Activated T-helper 2 cell treated with anti-CD3 and anti-CD28 coated beads, Interferon-gamma antibody, Interleukin-2, Interleukin-4, amounts not matched to agents 10 μg/mL and 5 μg/mL and 100 μg/mL, durations not matched to agents 14 hours and 24 hours and 36 hours (primary cell): ENCODE measurements at regions of chr3 and their contacts with region 1.

Region 1: GRCh38 chr3:195407531-195408409 is 35.0 kb downstream of the ACAP2 start:
- DNase-seq: no peak
- H3K4me3 Mint-ChIP-seq: peak overlapping the region; percentile 24
- H3K27ac Mint-ChIP-seq: peak overlapping the region; percentile 56
- H3K4me1 Mint-ChIP-seq: peaks cover 32% of the 10 kb centered on the region
- H3K27me3 Mint-ChIP-seq: no peaks in the 10 kb centered on the region

Region 2: DNA sequence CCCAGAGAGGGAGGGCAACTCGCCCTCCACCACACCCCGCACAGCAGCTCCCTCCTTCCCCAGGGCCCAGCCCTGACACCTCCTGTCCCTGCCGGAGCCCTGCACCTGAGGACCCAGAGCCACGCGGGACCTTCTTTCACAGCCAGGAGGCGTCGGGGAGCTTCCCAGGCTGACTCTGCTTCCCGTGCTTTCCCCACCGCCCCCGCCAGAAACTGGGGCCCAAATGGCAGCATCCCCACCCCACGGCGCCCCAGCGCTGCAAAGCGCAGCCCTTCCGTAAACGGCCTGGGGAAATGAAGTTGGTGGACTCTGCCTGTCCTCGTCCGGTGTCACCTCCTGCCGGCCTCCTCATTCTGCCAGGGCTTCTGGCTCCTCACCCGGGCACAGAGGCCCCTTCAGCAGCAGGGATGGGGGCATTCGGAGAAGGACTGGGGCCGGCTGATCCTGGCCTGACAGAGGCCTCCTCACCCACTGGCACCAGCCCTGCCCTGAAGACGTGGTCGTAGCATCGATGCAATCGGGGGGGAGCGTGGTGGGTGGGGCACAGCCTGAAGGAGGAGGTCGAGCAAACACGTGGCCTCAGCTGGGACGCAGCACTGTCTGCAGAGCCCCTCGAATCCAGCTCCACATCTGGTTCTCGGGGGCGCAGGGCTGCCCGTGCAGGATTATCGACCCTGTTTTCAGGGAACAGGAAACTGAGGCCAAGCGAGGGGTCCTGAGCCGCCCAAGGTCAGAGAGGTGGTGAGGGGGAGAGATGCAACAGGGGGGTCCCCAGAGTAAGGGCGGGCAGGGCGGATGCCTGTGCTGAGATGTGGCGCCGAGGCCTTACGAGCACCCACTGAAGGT is 372.2 kb before region 1 on chr3:
- intact Hi-C with region 1: no loop called
- DNase-seq: no peak
- H3K4me3 Mint-ChIP-seq: no peak overlapping the region
- H3K27ac Mint-ChIP-seq: no peak overlapping the region
- H3K4me1 Mint-ChIP-seq: no peaks in the 10 kb centered on the region
- H3K27me3 Mint-ChIP-seq: no peaks in the 10 kb centered on the region

Region 3: GRCh38 chr3:195442573-195443390 is 35.0 kb after region 1 on chr3 and contains the start of gene ACAP2:
- intact Hi-C with region 1: loop called (anchors 1 kb)
- DNase-seq: peak; percentile 99
- H3K4me3 Mint-ChIP-seq: peak within 1 kb of the TSS; percentile 94
- H3K27ac Mint-ChIP-seq: peak within 1 kb of the TSS; percentile 85
- H3K4me1 Mint-ChIP-seq: peaks cover 31% of the 10 kb centered on the region
- H3K27me3 Mint-ChIP-seq: no peaks in the 10 kb centered on the region
- total RNA-seq, gene ACAP2: 49.8 and 51.5 TPM in 2 replicates

Region 4: GRCh38 chr3:195467641-195468390 is 60.0 kb after region 1 on chr3:
- intact Hi-C with region 1: loop called (anchors 1 kb)
- DNase-seq: no peak
- H3K4me3 Mint-ChIP-seq: no peak overlapping the region
- H3K27ac Mint-ChIP-seq: peak overlapping the region; percentile 84
- H3K4me1 Mint-ChIP-seq: peaks cover 20% of the 10 kb centered on the region
- H3K27me3 Mint-ChIP-seq: peaks cover 5% of the 10 kb centered on the region

Region 5: DNA sequence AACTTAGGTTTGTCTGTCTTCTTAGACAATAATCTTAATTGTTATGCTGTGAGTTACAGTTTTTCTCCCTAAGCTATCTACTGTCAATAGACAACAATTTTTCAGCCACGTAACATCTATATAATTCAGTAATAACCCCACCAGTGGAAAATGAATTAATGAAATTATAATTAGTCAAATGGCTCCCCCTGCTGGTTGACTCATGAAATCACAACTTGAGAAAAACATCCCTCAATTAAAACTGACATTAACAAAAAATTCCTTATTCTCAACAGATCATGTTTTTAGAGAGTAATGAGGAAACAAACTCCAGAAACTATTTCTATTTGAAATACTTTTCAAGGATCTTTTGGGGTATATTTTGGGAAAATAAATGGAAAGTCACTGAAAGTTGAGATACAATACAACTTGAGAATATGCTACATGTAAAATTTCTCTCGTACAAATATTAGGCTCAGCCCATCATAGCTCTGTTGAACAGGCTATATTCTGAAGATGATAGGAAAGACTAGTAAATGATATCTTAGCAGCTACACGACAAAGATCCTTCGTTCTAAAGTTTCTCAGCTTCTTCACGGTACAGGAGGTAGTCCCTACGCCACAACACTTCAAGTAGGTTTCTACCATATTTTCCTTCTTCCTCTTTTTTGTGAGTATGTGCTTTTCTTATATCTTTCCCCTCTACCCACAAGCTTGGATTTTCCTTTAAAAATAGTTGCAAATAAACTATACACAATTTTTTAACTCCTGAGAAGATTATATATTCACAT is 114.7 kb after region 1 on chr3:
- intact Hi-C with region 1: loop called (anchors 5 kb)
- DNase-seq: no peak
- H3K4me3 Mint-ChIP-seq: no peak overlapping the region
- H3K27ac Mint-ChIP-seq: no peak overlapping the region
- H3K4me1 Mint-ChIP-seq: peaks cover 35% of the 10 kb centered on the region
- H3K27me3 Mint-ChIP-seq: no peaks in the 10 kb centered on the region

Region 6: GRCh38 chr3:195583831-195584542 is 176.2 kb after region 1 on chr3 and contains the start of gene APOD:
- intact Hi-C with region 1: no loop called
- DNase-seq: no peak
- H3K4me3 Mint-ChIP-seq: no peak within 1 kb of the TSS
- H3K27ac Mint-ChIP-seq: no peak within 1 kb of the TSS
- H3K4me1 Mint-ChIP-seq: peaks cover 13% of the 10 kb centered on the region
- H3K27me3 Mint-ChIP-seq: no peaks in the 10 kb centered on the region
- total RNA-seq, gene APOD: 0.87 and 1.3 TPM in 2 replicates

Region 7: GRCh38 chr3:195829897-195830254 is 422.1 kb after region 1 on chr3:
- intact Hi-C with region 1: no loop called
- DNase-seq: no peak
- H3K4me3 Mint-ChIP-seq: no peak overlapping the region
- H3K27ac Mint-ChIP-seq: no peak overlapping the region
- H3K4me1 Mint-ChIP-seq: no peaks in the 10 kb centered on the region
- H3K27me3 Mint-ChIP-seq: no peaks in the 10 kb centered on the region